ENCODE measurements at regions of chr11 and their contacts with region 1.

Region 1: DNA sequence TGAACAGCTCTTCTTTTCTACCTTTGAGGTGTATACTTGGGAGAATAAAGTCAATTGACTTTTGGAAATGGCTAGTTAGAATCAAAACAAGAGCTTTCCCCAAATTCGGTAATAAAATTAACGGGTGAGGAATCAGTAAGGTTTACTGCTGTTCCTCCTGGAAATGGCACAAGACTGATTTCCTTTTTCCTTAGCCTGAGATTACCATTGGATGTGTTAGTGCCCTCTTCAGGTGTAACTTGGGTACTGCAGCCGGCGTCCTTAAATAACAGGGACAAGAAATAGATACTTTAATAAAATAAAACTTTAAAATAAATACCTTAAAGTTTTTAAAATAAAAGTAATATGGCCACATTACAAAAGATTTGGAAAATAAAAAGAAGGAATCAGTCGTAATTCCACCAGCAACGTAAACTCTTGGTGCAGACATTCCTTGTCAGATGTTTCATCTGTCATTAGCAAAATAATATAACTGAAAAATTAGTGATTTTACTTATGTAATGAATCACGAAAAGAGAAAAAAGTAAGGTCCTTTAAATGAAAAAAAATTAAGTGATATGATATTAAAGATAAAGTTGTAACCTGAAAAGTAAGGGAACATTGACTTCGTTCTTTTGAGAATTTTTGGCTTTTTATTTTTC is 29.7 kb downstream of the ZFTA start:
- DNase-seq: peak; percentile 66
- H3K4me3 ChIP-seq: no peak overlapping the region
- H3K27ac ChIP-seq: no peak overlapping the region
- H3K27me3 ChIP-seq: no peaks in the 10 kb centered on the region
- CTCF ChIP-seq: peak; percentile 96

Region 2: GRCh38 chr11:63635762-63636465 is 102.9 kb before region 1 on chr11:
- CTCF ChIA-PET with region 1: interaction called, 76 read pairs
- POLR2A ChIA-PET with region 1: no interaction called
- DNase-seq: peak; percentile 27
- H3K4me3 ChIP-seq: no peak overlapping the region
- H3K27ac ChIP-seq: no peak overlapping the region
- H3K27me3 ChIP-seq: no peaks in the 10 kb centered on the region
- CTCF ChIP-seq: peak; percentile 89

Region 3: DNA sequence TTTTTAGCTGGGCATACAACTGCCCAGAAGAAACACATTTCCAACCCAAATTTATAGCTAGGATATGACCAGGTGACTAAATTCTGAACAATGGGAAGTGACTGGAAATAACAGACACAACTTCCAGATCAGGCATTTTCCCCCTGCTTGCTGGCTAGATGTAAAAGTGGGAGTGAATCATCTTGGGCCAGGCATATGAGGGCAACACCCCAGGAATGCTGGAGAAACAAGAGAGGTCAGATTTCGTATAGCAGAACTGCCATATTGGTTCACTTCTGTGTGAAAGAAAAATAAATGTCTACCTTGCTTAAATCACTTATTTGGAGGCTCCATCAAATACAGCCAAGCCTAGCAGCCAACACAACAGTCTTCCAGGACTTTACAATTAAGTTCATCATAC is 75.0 kb before region 1 on chr11:
- CTCF ChIA-PET with region 1: interaction called, 13 read pairs
- POLR2A ChIA-PET with region 1: no interaction called
- DNase-seq: no peak
- H3K4me3 ChIP-seq: no peak overlapping the region
- H3K27ac ChIP-seq: peak overlapping the region; percentile 0
- H3K27me3 ChIP-seq: no peaks in the 10 kb centered on the region
- CTCF ChIP-seq: no peak

Region 4: GRCh38 chr11:63698976-63699733 is 39.7 kb before region 1 on chr11:
- CTCF ChIA-PET with region 1: interaction called, 20 read pairs
- POLR2A ChIA-PET with region 1: no interaction called
- DNase-seq: no peak
- H3K4me3 ChIP-seq: no peak overlapping the region
- H3K27ac ChIP-seq: no peak overlapping the region
- H3K27me3 ChIP-seq: no peaks in the 10 kb centered on the region
- CTCF ChIP-seq: no peak

Region 5: DNA sequence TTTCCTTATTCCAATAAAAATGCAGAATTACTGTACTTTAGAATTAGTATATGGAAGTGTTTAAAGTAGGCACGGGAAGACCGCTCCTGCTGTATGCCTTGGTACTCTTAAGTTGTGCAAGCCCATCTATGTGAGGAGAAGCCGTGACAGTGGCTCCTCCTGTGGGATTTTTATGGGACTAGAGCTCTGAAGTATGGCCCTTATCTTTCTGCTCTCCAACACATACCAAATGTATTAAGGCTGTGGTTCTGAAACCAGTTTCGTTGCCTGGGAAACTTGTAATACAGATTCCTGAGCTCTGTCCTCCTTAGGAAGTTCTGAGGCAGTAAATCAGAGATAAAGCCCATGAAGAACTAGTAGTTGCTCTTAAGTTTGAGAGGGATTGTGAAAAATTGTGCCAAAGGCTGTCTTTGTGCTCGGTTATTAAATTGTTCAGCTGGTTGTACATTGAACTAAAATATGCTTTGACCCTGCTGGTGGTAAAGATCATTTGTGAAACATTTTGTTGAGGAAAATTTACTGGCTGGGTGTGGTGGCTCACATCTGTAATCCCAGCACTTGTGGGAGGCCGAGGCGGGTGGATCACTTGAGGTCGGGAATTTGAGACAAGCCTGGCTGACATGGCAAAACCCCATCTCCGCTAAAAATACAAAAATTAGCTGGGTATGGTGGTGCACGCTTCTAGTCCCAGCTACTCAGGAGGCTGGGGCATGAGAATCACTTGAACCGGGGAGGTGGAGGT is 28.2 kb before region 1 on chr11:
- CTCF ChIA-PET with region 1: interaction called, 32 read pairs
- POLR2A ChIA-PET with region 1: no interaction called
- DNase-seq: peak; percentile 7
- H3K4me3 ChIP-seq: no peak overlapping the region
- H3K27ac ChIP-seq: no peak overlapping the region
- H3K27me3 ChIP-seq: no peaks in the 10 kb centered on the region
- CTCF ChIP-seq: no peak